AG04449 (cell line): ENCODE measurements at regions of chr3 and their contacts with region 1.

Region 1: GRCh38 chr3:141105828-141106628 is 54.9 kb downstream of the SPSB4 start:
- DNase-seq: peak; percentile 33
- H3K4me3 ChIP-seq: no peak overlapping the region
- CTCF ChIP-seq: peak; percentile 59

Region 2: GRCh38 chr3:141000027-141000663 is 105.9 kb before region 1 on chr3:
- CTCF ChIA-PET with region 1: interaction called, 49 read pairs
- POLR2A ChIA-PET with region 1: no interaction called
- DNase-seq: no peak
- H3K4me3 ChIP-seq: no peak overlapping the region
- CTCF ChIP-seq: peak; percentile 69

Region 3: GRCh38 chr3:141011232-141011996 is 94.6 kb before region 1 on chr3:
- CTCF ChIA-PET with region 1: interaction called, 34 read pairs
- POLR2A ChIA-PET with region 1: no interaction called
- DNase-seq: no peak
- H3K4me3 ChIP-seq: no peak overlapping the region
- CTCF ChIP-seq: peak; percentile 88

Region 4: DNA sequence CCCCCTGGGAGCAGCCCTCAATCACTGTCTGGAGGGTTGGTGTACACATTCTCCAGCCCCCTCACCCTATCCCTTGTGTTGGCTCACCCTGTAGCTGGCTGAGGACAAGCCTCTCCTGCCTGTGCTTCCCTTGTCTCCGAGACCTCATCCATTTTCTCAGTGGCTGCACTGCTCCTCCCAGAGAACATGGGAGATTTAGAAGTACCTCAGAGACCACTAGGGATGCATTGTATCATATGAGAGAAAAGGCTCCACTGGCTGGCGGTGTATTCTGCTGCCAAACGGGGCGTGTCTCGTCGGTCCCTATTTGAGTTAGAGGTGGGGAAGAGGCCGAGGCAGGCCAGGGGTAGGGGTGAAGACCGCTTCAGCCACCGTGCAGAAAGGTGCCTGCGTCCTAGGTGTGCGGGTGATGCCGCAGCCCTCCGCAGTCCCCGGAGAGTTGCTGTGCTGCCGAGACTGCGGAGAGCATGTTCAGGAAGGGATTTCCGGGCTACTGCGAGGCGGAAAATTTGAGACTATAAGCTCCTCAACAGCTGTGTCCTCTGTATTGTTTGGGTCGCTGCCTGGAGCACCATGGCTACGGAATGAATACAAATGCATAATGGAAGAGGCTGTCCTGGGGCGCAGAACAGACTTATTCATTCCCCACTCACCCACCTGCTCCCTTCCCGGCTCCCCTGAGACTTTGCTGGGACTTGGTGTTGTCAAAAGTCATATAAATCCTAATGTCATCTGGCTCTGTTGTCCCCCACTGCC is 11.1 kb before region 1 on chr3:
- CTCF ChIA-PET with region 1: interaction called, 14 read pairs
- POLR2A ChIA-PET with region 1: no interaction called
- DNase-seq: no peak
- H3K4me3 ChIP-seq: no peak overlapping the region
- CTCF ChIP-seq: no peak